ENCODE measurements at regions of chrX and their contacts with region 1.

Region 1: GRCh38 chrX:88146577-88146976 is 600.4 kb upstream of the CPXCR1 start:
- DNase-seq: no peak
- H3K4me3 ChIP-seq: no peak overlapping the region
- H3K27ac ChIP-seq: no peak overlapping the region
- H3K4me1 ChIP-seq: no peaks in the 10 kb centered on the region
- H3K27me3 ChIP-seq: no peaks in the 10 kb centered on the region
- CTCF ChIP-seq: no peak
- EP300 ChIP-seq: no peak
- POLR2A ChIP-seq: no peak

Region 2: DNA sequence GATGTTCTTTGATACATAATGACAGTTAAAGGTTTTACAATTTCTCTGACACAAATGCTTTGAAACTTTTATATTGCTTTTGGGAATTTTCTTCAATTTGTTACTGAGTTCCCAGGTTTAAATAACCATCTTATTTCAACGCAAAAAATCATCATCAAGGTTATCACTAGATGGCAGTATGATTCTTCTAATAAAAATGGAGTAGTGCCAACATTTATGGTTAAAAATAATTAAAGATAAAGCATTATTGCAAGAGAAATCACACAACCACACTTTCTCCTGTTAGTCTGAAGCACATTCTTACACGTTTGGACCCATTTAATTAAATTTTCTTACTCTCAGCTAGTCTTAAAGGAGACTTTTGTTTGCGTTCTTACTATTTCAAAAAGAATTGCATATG is 10.8 kb before region 1 on chrX:
- in situ Hi-C with region 1: no loop called
- intact Hi-C with region 1: loop called (anchors 1 kb)
- DNase-seq: no peak
- H3K4me3 ChIP-seq: no peak overlapping the region
- H3K27ac ChIP-seq: no peak overlapping the region
- H3K4me1 ChIP-seq: no peaks in the 10 kb centered on the region
- H3K27me3 ChIP-seq: no peaks in the 10 kb centered on the region
- CTCF ChIP-seq: no peak
- EP300 ChIP-seq: no peak
- POLR2A ChIP-seq: no peak